ENCODE measurements at regions of chr2 and their contacts with region 1.

Region 1: DNA sequence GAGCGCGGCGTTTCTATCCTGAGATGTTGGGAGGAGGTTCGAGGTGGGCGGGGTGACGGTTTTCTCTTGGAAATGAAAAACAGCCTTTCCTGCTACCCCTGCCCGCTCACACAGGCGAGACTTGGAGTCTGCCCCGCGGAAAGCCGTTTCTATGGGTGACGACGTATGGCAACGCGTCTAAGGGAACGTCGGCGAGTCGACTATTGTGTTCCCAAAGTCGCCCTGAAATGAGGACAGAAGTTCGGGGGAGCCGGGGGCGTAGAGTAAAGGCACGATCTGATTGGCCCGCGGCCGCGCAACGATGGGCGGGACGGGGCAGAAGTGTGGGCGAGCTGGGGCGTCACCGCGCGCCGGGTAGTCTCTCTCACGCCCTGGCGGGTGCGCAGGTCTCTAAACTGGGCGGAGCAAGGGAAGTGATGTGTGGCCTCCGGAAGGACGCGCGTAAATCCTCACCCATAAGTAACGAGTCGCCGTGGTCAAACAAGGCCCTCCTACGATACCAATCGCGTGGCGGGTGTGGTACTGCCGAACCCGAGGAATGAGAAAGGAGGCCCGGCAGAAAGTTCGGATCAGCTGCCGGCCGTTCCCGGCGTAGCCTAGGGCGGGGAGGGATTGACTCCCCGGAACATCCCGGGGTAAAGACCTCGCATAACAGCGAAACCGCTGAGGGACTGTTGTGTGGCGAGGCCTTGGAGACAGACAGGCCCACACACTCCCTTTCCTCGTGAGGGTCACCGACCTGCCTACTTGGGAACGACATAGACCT is 89.6 kb downstream of the FAM161A start:
- DNase-seq: peak; percentile 97 to 98 (median 98)
- ATAC-seq: peak; percentile 99 to 100 (median 99)
- H3K4me3 ChIP-seq: peak overlapping the region; percentile 28 to 82 (median 68)
- H3K27ac ChIP-seq: peak overlapping the region; percentile 92 to 99 (median 96)
- H3K4me1 ChIP-seq: peaks cover 0 to 13% (median 4%) of the 10 kb centered on the region in 12 donors
- H3K27me3 ChIP-seq: no peaks in the 10 kb centered on the region
- CTCF ChIP-seq: no peak
- POLR2A ChIP-seq: peak; percentile 38 to 81

Region 2: DNA sequence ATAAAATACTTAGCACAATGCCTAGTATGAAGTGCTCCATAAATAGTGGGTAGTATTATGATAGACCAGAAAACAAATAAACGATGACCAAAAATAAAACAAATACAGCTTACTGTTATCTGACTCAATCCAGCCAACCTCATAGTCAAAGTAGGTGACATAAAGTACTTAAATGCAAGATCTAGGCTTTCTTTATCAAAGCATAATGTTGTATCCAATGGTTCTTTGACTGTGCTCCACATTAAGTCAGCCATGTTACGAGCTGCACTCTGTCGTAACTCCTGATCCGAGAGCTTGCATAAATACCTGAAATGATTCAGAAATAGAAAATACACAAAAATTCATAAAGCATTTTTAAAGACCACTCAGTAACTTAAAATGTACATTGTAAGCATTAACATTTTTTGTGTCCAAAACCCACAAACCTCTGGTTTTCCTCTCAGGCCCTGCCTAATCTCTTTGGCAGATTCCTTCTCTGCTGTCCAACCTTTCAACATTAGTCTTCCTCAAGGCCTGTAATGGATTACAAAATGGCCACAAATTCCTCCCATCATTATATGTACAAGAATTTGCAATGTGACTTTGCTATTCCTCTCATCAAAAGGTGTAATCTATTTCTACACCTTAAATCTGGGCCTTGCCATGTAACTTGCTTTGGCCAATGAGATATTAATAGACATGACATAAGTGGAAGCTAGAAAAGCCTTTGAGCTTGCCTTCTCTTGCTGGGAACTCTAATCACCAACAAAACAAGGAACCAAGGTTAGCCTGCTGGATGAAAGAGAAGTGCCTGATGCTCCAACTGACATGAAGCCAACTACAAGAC is 383.9 kb before region 1 on chr2:
- intact Hi-C with region 1: no loop called
- DNase-seq: no peak
- ATAC-seq: peak; percentile 68 to 90 (median 88)
- H3K4me3 ChIP-seq: no peak overlapping the region
- H3K27ac ChIP-seq: peak overlapping the region in 10 of 12 donors; percentile 2 to 72 (median 44)
- H3K4me1 ChIP-seq: peaks cover 0 to 16% (median 3%) of the 10 kb centered on the region in 12 donors
- H3K27me3 ChIP-seq: no peaks in the 10 kb centered on the region
- CTCF ChIP-seq: no peak
- POLR2A ChIP-seq: no peak

Region 3: GRCh38 chr2:61470965-61471904 is 293.0 kb before region 1 on chr2 and contains the start of gene USP34:
- intact Hi-C with region 1: loop called in 1 of 10 experiments (anchors 5 kb)
- DNase-seq: peak; percentile 96 to 97 (median 97)
- ATAC-seq: peak; percentile 96 to 98 (median 97)
- H3K4me3 ChIP-seq: peak within 1 kb of the TSS; percentile 68 to 99 (median 90)
- H3K27ac ChIP-seq: peak within 1 kb of the TSS; percentile 95 to 100 (median 98)
- H3K4me1 ChIP-seq: peaks cover 2 to 41% (median 26%) of the 10 kb centered on the region in 12 donors
- H3K27me3 ChIP-seq: no peaks in the 10 kb centered on the region
- CTCF ChIP-seq: no peak
- POLR2A ChIP-seq: peak in 1 of 2 donors; percentile 85
- total RNA-seq, gene USP34: 48.5 to 82.8 (median 61.9) TPM

Region 4: DNA sequence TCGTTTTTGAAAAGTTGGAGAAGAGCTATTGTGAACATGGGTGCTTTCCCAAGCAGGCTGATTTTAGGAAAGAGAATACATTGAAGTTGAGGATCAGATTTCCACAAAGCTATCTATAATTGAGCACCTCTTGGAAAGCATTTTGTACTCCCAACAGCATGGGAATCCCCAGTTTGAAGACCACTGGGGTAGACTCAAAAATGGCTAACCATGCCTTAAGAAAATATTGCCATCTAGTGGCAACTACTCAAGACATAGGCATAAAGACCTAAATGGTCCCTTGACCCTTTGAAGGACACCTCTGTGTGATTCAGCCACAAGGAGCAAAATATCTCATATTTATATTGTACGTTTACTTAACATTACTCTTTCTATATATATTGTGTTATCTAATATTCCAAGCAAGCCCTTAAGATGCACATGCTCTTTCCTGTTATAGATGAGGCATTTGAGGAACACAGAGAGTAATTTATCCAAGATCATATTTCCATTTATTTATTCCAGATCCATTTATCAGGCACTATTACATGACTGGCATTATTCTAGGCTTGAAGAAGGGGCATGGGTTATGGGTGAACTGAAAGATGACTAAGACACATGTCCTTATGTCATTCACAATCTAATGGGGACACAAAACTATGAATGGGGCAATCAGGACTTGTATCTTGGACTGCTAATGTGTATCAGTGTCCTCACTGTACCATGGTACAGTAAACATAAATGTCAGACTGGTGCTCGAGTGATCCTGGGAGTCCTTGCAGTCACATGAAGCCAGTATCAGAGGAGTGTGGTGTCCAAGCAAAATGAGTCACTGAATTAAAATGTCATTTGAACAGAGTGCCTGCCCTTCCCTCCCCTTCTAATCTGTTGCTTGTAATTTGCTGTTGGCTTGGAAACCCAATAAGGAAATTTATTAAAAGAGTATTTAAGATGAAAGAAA is 105.1 kb before region 1 on chr2:
- intact Hi-C with region 1: loop called in 2 of 10 experiments (anchors 2 to 10 kb)
- DNase-seq: peak in 3 of 5 donors; percentile 20 to 42 (median 31)
- ATAC-seq: peak; percentile 92 to 94 (median 94)
- H3K4me3 ChIP-seq: no peak overlapping the region
- H3K27ac ChIP-seq: peak overlapping the region; percentile 67 to 93 (median 84)
- H3K4me1 ChIP-seq: peaks cover 0 to 27% (median 16%) of the 10 kb centered on the region in 12 donors
- H3K27me3 ChIP-seq: no peaks in the 10 kb centered on the region
- CTCF ChIP-seq: peak; percentile 30 to 61 (median 43)
- POLR2A ChIP-seq: no peak

Region 5: GRCh38 chr2:61694312-61695274 is 69.6 kb before region 1 on chr2:
- intact Hi-C with region 1: loop called in 7 of 10 experiments (anchors 2 to 10 kb)
- DNase-seq: peak; percentile 95 to 98 (median 97)
- ATAC-seq: peak; percentile 99 to 100 (median 100)
- H3K4me3 ChIP-seq: peak overlapping the region; percentile 48 to 94 (median 82)
- H3K27ac ChIP-seq: peak overlapping the region; percentile 54 to 91 (median 84)
- H3K4me1 ChIP-seq: peaks cover 0 to 12% (median 5%) of the 10 kb centered on the region in 12 donors
- H3K27me3 ChIP-seq: no peaks in the 10 kb centered on the region
- CTCF ChIP-seq: peak; percentile 20 to 70 (median 50)
- POLR2A ChIP-seq: peak in 1 of 2 donors; percentile 65

Region 6: DNA sequence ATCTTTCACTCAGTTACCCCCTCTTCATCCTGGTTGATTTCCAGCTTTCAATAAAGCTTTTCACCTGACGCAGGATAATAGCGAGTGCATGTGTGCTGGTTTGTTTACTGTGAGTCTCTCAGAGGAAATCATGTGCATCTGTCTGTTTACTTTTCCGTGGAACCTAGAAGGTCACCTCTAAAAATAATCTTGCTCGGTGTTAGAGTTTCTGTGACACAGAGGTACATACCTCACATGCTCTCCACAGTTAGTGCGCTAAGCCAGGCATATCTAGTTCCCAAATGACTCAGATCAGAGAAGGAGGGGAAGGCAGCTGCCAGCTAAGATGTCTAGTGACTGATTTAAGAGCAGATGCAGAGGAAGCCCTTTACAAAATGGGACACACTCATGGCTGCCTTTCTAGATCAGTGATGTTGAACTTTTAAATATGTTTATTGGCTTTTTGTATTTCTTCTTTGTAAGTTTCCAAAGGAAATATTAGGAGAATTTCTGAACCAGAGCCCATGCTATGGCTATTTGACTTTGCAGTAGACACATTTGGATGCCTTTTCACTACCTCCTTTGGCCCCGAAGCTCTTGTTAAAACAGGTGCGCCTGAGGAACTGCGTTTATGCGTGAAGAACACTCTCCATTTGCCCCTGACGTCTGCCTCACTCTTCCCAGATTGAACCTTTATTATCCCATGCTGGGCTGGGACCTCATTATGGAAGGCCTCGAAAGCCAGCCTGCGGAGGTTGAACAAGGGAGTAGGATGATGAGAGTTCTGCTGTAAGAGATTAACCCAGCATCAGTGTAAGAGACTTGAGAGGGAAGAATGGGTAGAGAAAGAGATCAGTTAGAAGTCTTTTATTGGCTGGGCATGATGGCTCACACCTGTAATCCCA is 56.0 kb before region 1 on chr2:
- intact Hi-C with region 1: loop called in 3 of 10 experiments (anchors 5 kb)
- DNase-seq: peak in 1 of 5 donors; percentile 69
- ATAC-seq: peak; percentile 95 to 97 (median 95)
- H3K4me3 ChIP-seq: no peak overlapping the region
- H3K27ac ChIP-seq: peak overlapping the region; percentile 55 to 91 (median 69)
- H3K4me1 ChIP-seq: peaks cover 0 to 9% (median 0%) of the 10 kb centered on the region in 12 donors
- H3K27me3 ChIP-seq: no peaks in the 10 kb centered on the region
- CTCF ChIP-seq: no peak
- POLR2A ChIP-seq: peak in 1 of 2 donors; percentile 36

Region 7: GRCh38 chr2:61816480-61817355 is 52.5 kb after region 1 on chr2:
- intact Hi-C with region 1: no loop called
- DNase-seq: peak in 1 of 5 donors; percentile 42
- ATAC-seq: peak; percentile 62 to 85 (median 66)
- H3K4me3 ChIP-seq: no peak overlapping the region
- H3K27ac ChIP-seq: peak overlapping the region in 4 of 12 donors; percentile 8 to 34 (median 30)
- H3K4me1 ChIP-seq: peaks cover 0 to 6% (median 0%) of the 10 kb centered on the region in 12 donors
- H3K27me3 ChIP-seq: no peaks in the 10 kb centered on the region
- CTCF ChIP-seq: no peak
- POLR2A ChIP-seq: no peak

Region 8: DNA sequence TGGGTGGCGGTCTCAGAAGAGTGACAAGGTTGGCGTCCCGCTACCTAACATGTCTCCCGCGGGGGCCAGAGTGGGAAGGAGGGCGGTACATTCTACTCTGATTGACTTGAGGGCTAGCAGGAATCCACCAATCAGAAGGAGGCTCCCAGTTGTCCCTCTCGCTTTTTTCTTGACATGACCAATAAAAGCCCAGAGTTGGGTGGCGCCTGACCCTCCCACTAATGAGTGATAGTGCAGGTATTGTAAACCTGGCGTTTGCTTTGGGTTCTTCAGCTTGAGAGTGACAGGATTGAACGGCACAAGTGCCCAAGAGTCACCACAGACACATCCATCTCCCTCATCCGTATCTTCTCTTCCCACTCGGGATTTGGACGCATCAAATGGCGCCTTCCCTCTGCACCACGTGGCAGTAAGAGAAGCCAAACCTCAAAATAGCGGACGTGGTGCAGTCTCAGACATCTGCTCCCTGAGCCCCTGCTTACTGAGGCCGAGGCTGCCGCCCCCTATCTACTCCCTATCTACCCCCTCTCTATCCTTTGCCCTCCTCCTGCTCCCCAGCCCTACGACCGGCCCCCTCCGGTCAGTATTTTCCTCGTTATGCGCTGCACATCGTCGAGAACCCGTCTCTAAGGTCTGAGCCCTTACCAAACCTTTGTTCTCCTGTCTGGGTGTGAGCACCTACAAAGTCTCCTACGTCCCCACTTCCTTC is 90.4 kb after region 1 on chr2:
- intact Hi-C with region 1: loop called in 1 of 10 experiments (anchors 5 kb)
- DNase-seq: peak; percentile 84 to 91 (median 89)
- ATAC-seq: peak; percentile 94 to 97 (median 96)
- H3K4me3 ChIP-seq: peak overlapping the region; percentile 55 to 88 (median 71)
- H3K27ac ChIP-seq: peak overlapping the region in 11 of 12 donors; percentile 62 to 87 (median 79)
- H3K4me1 ChIP-seq: peaks cover 0 to 17% (median 7%) of the 10 kb centered on the region in 12 donors
- H3K27me3 ChIP-seq: no peaks in the 10 kb centered on the region
- CTCF ChIP-seq: no peak
- POLR2A ChIP-seq: peak in 1 of 2 donors; percentile 15